ENCODE measurements at regions of chr9 and their contacts with region 1.

Region 1: DNA sequence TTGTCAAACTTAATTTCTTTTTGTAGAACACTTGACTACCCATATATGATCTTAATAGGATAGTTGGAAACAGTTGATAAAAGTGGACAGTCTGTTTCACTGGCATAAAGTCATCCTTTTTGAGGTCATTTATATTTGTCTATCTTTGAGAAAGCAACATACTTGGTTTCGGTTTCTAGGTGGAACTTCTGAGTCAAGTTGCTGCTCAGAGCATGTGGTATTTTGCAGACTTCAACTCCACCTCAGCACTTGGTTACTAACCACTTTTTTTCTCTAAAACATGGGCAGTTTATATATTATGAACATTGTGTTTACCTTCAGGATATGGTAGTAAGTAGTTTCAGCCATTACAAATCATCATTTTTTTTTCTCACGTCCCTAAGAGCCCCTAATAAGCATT is 1749.0 kb upstream of the C9orf72 start:
- DNase-seq: no peak
- ATAC-seq: no peak
- H3K4me3 ChIP-seq: no peak overlapping the region
- H3K27ac ChIP-seq: no peak overlapping the region
- H3K4me1 ChIP-seq: no peaks in the 10 kb centered on the region
- H3K27me3 ChIP-seq: no peaks in the 10 kb centered on the region
- CTCF ChIP-seq: no peak
- POLR2A ChIP-seq: no peak

Region 2: DNA sequence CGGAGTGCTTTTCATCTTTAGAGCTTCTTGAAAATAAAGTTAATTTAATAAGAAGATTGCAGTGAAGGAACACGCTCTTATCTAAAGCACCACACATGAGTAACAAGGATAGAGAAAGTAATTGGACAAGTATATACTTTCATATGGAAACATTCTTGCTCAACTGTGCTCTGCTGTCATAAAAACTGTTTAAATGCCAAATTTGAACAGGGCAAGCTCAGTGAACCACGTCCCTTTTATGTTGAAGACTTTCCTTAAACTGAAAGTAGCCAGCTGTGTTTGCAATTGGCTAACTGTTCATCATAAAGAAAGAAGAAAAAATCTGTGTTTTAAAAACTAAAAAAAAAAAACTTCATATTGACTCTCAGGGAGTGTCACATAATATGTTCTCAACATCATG is 138.3 kb before region 1 on chr9:
- intact Hi-C with region 1: no loop called
- DNase-seq: no peak
- ATAC-seq: no peak
- H3K4me3 ChIP-seq: no peak overlapping the region
- H3K27ac ChIP-seq: no peak overlapping the region
- H3K4me1 ChIP-seq: no peaks in the 10 kb centered on the region
- H3K27me3 ChIP-seq: no peaks in the 10 kb centered on the region
- CTCF ChIP-seq: no peak
- POLR2A ChIP-seq: no peak

Region 3: GRCh38 chr9:29282121-29282520 is 40.1 kb before region 1 on chr9:
- intact Hi-C with region 1: loop called in 1 of 10 experiments (anchors 10 kb)
- DNase-seq: no peak
- ATAC-seq: no peak
- H3K4me3 ChIP-seq: no peak overlapping the region
- H3K27ac ChIP-seq: no peak overlapping the region
- H3K4me1 ChIP-seq: no peaks in the 10 kb centered on the region
- H3K27me3 ChIP-seq: no peaks in the 10 kb centered on the region
- CTCF ChIP-seq: no peak
- POLR2A ChIP-seq: no peak

Region 4: GRCh38 chr9:29475471-29475870 is 153.2 kb after region 1 on chr9:
- intact Hi-C with region 1: no loop called
- DNase-seq: no peak
- ATAC-seq: no peak
- H3K4me3 ChIP-seq: no peak overlapping the region
- H3K27ac ChIP-seq: no peak overlapping the region
- H3K4me1 ChIP-seq: no peaks in the 10 kb centered on the region
- H3K27me3 ChIP-seq: no peaks in the 10 kb centered on the region
- CTCF ChIP-seq: no peak
- POLR2A ChIP-seq: no peak

Measured in heart left ventricle (tissue), 16 donors.